ENCODE measurements at regions of chr9 and their contacts with region 1.

Region 1: DNA sequence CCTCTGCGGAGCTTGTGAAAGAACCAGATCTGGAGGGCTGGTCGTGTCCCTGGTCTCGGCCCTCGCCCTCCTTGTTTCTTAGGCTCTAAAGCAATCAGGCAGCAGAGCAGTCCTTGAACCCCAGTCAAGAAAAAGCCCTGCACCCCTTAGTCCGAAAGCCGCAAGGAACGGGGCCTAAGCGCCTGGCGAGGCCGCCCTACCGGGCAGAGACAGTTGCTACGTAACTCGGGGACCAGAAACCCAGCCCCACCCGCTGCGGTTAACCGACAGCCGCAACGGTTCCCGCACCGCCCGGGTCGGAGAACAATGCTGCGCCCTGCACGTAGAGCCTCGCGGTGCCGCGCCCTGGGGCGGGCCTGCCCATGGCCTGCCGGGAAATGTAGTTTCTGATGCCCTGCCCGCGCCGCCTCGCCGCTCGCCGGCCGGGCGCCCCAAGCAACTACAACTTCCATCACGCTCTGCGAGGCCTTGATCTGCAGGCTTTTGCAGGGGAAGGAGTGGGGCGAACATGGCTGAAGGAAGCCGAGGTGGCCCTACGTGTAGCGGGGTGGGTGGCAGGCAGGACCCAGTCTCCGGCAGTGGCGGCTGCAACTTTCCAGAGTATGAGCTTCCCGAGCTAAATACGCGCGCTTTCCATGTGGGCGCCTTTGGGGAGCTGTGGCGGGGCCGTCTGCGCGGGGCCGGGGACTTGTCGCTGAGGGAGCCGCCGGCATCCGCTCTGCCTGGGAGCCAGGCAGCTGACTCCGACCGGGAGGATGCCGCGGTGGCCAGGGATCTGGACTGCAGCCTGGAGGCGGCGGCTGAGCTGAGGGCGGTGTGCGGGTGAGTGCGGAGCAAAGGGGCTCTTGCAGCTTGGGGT is at the start of gene SNAPC3:
- DNase-seq: peak; percentile 96
- H3K4me3 Mint-ChIP-seq: peak within 1 kb of the TSS; percentile 90
- H3K27ac Mint-ChIP-seq: peak within 1 kb of the TSS; percentile 81
- H3K4me1 Mint-ChIP-seq: peaks cover 29% of the 10 kb centered on the region
- H3K27me3 Mint-ChIP-seq: no peaks in the 10 kb centered on the region
- total RNA-seq, gene SNAPC3: 31.2 to 35.1 TPM

Region 2: GRCh38 chr9:14863402-14863801 is 559.2 kb before region 1 on chr9:
- CTCF ChIA-PET with region 1: no interaction called
- POLR2A ChIA-PET with region 1: no interaction called
- intact Hi-C with region 1: no loop called
- DNase-seq: no peak
- H3K4me3 Mint-ChIP-seq: no peak overlapping the region
- H3K27ac Mint-ChIP-seq: no peak overlapping the region
- H3K4me1 Mint-ChIP-seq: no peaks in the 10 kb centered on the region
- H3K27me3 Mint-ChIP-seq: no peaks in the 10 kb centered on the region

Region 3: GRCh38 chr9:15211160-15211814 is 211.3 kb before region 1 on chr9:
- CTCF ChIA-PET with region 1: interaction called, 4 read pairs
- POLR2A ChIA-PET with region 1: interaction called, 4 read pairs
- intact Hi-C with region 1: loop called (anchors 1 kb)
- DNase-seq: peak; percentile 58
- H3K4me3 Mint-ChIP-seq: no peak overlapping the region
- H3K27ac Mint-ChIP-seq: no peak overlapping the region
- H3K4me1 Mint-ChIP-seq: peaks cover 8% of the 10 kb centered on the region
- H3K27me3 Mint-ChIP-seq: no peaks in the 10 kb centered on the region

Region 4: GRCh38 chr9:15271403-15271802 is 151.2 kb before region 1 on chr9:
- CTCF ChIA-PET with region 1: no interaction called
- POLR2A ChIA-PET with region 1: no interaction called
- intact Hi-C with region 1: loop called (anchors 2 kb)
- DNase-seq: peak; percentile 49
- H3K4me3 Mint-ChIP-seq: no peak overlapping the region
- H3K27ac Mint-ChIP-seq: no peak overlapping the region
- H3K4me1 Mint-ChIP-seq: peaks cover 35% of the 10 kb centered on the region
- H3K27me3 Mint-ChIP-seq: no peaks in the 10 kb centered on the region

Region 5: DNA sequence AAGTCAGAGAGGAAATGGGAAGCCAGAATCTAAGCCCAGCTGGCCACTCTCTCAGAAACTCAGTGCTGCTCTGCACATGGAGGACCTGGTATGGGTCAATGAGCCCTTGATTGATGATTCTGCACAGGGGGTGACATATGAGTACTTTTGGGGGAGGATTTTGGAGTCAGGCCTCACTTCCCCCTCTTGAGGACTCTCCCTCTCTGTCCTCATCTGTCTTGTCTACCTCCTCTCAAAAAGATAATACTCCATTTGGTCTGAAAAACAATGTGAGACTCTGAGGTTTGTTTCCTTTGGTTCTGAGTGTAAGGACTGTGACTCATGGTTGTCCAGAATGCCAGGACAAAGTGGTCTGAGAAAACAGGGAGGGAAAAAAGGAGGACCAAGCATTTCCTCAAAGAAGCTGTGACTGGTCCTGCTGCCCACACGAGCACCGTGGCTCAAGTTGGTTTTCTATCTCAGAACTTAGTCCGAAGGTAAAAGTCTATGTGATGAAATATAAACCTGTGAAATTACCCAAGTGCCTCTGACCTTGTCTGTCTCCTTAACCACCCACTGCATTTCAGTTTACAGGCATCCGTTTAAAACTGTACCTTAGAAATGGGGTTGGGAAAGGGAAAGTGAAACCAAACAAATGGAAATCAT is 126.7 kb before region 1 on chr9:
- CTCF ChIA-PET with region 1: interaction called, 3 read pairs
- POLR2A ChIA-PET with region 1: interaction called, 4 read pairs
- intact Hi-C with region 1: loop called (anchors 2 kb)
- DNase-seq: peak; percentile 37
- H3K4me3 Mint-ChIP-seq: peak overlapping the region; percentile 69
- H3K27ac Mint-ChIP-seq: peak overlapping the region; percentile 97
- H3K4me1 Mint-ChIP-seq: peaks cover 84% of the 10 kb centered on the region
- H3K27me3 Mint-ChIP-seq: no peaks in the 10 kb centered on the region

Region 6: GRCh38 chr9:15357050-15357653 is 65.4 kb before region 1 on chr9:
- CTCF ChIA-PET with region 1: no interaction called
- POLR2A ChIA-PET with region 1: no interaction called
- intact Hi-C with region 1: loop called (anchors 1 kb)
- DNase-seq: peak; percentile 16
- H3K4me3 Mint-ChIP-seq: no peak overlapping the region
- H3K27ac Mint-ChIP-seq: no peak overlapping the region
- H3K4me1 Mint-ChIP-seq: peaks cover 8% of the 10 kb centered on the region
- H3K27me3 Mint-ChIP-seq: no peaks in the 10 kb centered on the region

Region 7: DNA sequence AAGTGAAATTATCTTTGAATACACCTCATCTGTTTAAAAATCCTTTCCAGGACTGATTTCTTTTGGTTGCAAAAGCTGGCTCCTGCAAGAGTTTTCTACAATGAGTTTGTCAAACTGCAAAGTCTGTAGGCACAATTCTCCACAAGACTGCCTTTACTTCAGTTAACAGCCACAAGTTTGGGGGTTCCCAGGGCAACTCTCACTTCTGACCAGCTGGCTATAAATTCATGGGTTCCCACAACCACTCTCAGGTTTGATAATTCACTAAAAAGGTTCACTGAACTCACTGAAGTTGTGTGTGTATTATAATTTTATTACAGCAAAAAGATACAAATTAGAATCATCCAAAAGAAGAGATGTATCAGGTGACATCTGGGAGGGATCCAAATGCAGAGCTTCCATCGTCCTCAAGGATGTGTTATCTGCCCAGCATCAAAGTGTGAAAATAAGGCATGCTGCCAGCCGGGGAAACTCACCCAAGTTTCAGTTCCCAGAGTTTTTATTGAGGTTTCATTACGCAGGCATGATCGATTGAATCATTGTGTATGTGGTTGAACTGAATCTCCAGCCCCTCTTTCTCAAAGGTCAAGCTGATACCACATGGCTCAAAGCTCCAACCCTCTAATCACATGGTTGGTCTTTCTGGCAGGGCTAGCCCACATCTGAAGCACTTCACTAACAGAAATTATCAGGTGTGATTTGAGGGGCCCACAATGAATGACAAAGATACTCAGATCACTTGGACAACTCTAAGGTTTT is 107.1 kb after region 1 on chr9:
- CTCF ChIA-PET with region 1: no interaction called
- POLR2A ChIA-PET with region 1: no interaction called
- intact Hi-C with region 1: loop called (anchors 1 kb)
- DNase-seq: no peak
- H3K4me3 Mint-ChIP-seq: no peak overlapping the region
- H3K27ac Mint-ChIP-seq: no peak overlapping the region
- H3K4me1 Mint-ChIP-seq: peaks cover 9% of the 10 kb centered on the region
- H3K27me3 Mint-ChIP-seq: no peaks in the 10 kb centered on the region

Region 8: DNA sequence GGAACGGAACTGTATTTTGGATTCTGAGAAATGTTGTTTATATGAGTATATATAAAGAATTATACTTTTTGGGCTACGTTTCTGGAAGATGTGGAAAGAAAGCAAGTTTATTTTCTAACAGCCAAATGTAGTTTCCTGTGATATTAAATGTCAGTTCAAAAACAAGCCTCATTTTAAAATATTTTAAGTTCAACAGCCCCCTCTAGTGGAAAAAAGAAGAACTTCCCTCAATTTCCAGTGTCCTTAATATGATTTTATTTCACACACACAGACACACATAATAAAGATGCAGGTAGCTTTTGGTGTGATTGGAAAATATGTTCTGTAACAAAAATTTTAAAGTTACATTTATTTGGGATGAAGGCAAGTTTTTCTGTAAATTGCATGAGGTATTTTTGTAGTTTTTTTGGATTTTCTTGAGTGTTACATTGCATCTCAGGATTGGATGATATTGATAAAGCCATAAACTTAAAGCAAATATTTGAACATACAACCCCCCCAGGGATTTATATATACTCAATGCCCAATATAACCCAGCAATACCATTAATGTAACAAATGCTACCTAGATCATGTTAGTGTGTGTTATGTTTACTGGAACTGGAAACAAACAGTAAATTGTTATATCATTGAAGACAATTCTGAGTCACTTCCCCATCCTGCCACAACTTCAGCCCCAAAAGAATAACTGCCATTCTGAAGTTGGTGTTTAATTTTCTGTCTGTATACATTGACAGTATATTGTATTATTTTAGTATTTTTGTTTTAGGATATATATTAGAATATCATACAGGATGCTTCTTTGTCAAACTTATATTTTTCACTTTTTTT is 184.3 kb after region 1 on chr9:
- CTCF ChIA-PET with region 1: interaction called, 3 read pairs
- POLR2A ChIA-PET with region 1: no interaction called
- intact Hi-C with region 1: loop called (anchors 10 kb)
- DNase-seq: no peak
- H3K4me3 Mint-ChIP-seq: no peak overlapping the region
- H3K27ac Mint-ChIP-seq: no peak overlapping the region
- H3K4me1 Mint-ChIP-seq: no peaks in the 10 kb centered on the region
- H3K27me3 Mint-ChIP-seq: no peaks in the 10 kb centered on the region